PC-3 (cell line): ENCODE measurements at regions of chr3 and their contacts with region 1.

Region 1: DNA sequence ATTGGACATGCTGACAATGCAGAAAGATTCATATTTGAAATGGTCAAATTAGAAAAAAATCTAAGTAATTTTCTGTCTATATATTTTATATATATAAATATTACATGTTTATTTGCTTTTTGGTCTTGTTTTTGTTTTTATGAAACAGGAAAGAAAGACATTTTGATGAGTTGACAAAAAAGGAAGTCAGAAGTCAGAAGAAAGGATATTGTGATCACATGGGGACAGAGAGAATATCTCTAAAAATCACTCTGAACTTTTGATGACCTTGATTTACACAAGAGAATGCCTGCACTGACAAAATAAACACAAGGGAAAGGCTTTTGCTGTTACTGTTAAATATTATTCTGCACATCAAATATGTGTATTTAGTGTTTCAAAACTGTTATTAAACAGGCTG is 811.2 kb downstream of the SI start:
- DNase-seq: no peak
- ATAC-seq: no peak
- H3K4me3 ChIP-seq: no peak overlapping the region
- H3K27ac ChIP-seq: no peak overlapping the region
- H3K4me1 ChIP-seq: no peaks in the 10 kb centered on the region
- H3K27me3 ChIP-seq: no peaks in the 10 kb centered on the region
- CTCF ChIP-seq: no peak

Region 2: DNA sequence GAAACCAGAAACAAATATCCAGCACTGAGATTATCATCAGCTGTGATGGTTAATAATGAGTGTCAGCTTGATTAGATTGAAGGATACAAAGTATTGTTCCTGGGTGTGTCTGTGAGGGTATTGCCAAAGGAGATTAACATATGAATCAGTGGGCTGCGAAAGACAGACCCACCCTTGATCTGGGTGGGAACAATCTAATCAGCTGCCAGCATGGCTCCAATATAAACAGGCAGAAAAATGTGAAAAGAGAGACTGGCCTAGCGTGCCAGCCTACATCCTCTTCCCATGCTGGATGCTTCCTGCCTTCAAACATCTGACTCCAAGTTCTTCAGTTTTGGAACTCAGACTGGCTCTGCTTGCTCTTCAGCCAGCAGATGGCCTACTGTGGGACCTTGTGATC is 58.2 kb before region 1 on chr3:
- CTCF ChIA-PET with region 1: no interaction called
- POLR2A ChIA-PET with region 1: no interaction called
- intact Hi-C with region 1: no loop called
- DNase-seq: no peak
- ATAC-seq: no peak
- H3K4me3 ChIP-seq: no peak overlapping the region
- H3K27ac ChIP-seq: no peak overlapping the region
- H3K4me1 ChIP-seq: no peaks in the 10 kb centered on the region
- H3K27me3 ChIP-seq: no peaks in the 10 kb centered on the region
- CTCF ChIP-seq: no peak

Region 3: DNA sequence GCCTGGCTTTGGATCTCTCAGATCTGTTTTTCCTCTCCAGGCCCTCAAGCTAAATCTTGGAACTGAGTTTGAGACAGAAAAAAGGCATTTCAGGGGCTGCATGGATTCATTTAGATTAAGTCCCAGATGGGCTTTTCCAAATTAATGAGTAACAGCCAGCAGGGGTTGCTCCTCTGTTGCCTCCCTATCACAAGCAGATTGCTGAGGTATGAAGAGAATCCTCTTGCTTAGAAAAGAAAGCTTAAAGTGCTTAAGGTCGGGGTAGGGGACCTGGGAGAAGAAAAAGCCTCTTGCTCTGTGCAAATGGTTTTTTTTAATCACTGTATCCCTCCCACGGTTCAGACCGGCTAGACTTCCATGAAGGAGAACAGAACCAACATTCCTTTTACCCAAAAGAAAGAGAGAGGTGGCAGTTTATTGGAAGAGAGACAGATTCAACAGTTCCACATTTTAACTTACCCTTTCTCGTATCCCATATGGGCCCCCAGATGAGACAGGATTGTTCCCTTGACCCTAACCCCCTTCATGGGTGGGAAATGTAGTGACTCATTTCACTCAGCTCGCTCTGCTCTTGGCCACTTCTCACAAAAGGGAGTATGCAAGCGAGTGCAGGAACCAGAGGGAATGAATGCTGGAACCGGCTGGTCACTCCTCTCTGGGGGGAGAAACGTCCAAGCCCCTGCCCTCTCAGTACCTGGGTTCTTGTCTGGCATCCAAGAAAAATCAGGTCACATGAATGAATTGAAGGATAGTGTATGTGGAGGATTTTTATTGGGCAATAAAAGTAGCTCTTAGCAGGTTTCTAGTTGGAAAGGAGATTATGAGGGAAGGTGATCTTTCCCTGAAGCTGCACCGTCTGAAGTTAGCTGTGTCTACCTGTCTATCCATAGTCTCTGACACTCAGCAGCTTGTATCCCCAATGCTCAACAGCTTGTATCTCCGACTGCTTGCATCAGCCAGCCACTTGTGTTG is 66.1 kb after region 1 on chr3:
- CTCF ChIA-PET with region 1: no interaction called
- POLR2A ChIA-PET with region 1: no interaction called
- intact Hi-C with region 1: no loop called
- DNase-seq: no peak
- ATAC-seq: no peak
- H3K4me3 ChIP-seq: no peak overlapping the region
- H3K27ac ChIP-seq: no peak overlapping the region
- H3K4me1 ChIP-seq: no peaks in the 10 kb centered on the region
- H3K27me3 ChIP-seq: no peaks in the 10 kb centered on the region
- CTCF ChIP-seq: no peak

Region 4: GRCh38 chr3:164558687-164559086 is 291.6 kb after region 1 on chr3:
- CTCF ChIA-PET with region 1: no interaction called
- POLR2A ChIA-PET with region 1: interaction called, 27 read pairs
- intact Hi-C with region 1: no loop called
- DNase-seq: no peak
- ATAC-seq: no peak
- H3K4me3 ChIP-seq: no peak overlapping the region
- H3K27ac ChIP-seq: no peak overlapping the region
- H3K4me1 ChIP-seq: no peaks in the 10 kb centered on the region
- H3K27me3 ChIP-seq: no peaks in the 10 kb centered on the region
- CTCF ChIP-seq: no peak